OCI-LY7 (cell line): ENCODE measurements at regions of chr16 and their contacts with region 1.

Region 1: DNA sequence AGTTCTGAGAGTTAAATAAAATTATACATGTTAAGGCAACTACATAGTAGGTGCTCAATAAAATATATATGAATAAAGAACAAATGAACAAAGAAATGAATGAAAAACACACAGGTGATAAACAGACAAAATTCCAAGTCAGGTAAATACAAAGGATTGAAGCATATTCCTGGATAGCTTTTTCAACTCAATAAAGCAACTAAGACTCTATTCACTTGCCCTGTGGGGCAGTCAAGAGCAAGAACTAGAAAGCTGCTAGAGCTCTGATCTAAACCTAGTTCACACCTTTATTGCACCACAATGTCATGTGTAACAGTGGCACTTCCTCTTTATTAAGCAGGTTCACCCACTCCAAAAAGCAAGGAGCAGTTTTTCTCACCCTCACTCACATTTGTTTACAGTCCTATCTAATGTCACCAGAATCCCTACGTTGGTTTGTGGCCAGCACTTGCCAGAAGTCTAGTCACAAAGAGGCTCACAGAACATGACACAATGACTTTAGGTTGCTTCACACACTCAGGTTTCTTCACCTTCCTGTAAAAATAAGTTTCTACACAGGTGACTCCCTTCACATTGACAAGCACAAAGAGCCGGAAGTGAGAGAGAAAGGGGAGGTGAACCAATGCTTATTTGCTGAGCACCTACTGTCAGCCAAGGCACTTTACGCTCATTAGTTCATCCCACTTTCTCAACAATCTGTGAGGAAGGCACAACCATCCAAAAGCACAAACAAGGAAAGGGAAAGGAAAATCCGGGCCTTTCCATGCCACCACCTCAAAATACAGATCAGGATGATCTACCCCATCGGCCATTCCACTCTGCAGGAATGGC is 70.8 kb downstream of the XPO6 start:
- DNase-seq: peak; percentile 80
- H3K4me3 ChIP-seq: peak overlapping the region; percentile 54
- H3K27ac ChIP-seq: peak overlapping the region; percentile 95
- H3K4me1 ChIP-seq: peaks cover 48% of the 10 kb centered on the region
- CTCF ChIP-seq: peak; percentile 52

Region 2: GRCh38 chr16:28205117-28205899 is 64.3 kb after region 1 on chr16:
- CTCF ChIA-PET with region 1: no interaction called
- POLR2A ChIA-PET with region 1: interaction called, 3 read pairs
- intact Hi-C with region 1: loop called (anchors 5 kb)
- DNase-seq: no peak
- H3K4me3 ChIP-seq: no peak overlapping the region
- H3K27ac ChIP-seq: no peak overlapping the region
- H3K4me1 ChIP-seq: peaks cover 36% of the 10 kb centered on the region
- CTCF ChIP-seq: no peak